ENCODE measurements at regions of chr20 and their contacts with region 1.

Region 1: GRCh38 chr20:51469578-51470498 is 72.7 kb downstream of the NFATC2 start:
- DNase-seq: no peak
- H3K4me3 Mint-ChIP-seq: no peak overlapping the region
- H3K27ac Mint-ChIP-seq: no peak overlapping the region
- H3K4me1 Mint-ChIP-seq: peaks cover 32% of the 10 kb centered on the region
- H3K27me3 Mint-ChIP-seq: no peaks in the 10 kb centered on the region

Region 2: DNA sequence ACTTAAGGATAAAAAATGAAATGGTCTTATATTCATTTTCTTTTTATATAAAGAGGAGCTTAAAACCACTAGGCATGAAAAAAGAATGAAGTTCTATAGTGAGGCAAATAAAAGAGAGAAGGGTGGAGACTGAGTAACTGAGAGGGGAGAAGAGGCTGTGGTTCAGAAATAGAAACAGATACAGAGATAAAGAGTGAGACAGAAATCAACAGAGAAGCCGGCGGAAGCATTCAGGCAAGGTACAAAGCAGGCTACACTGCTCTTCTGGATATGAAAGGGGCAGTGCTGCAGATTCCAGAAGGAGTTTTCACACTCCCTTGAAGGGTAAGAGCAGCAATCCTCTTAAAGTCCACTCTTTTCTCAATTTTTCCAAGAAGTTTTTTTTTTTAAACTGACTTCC is 42.8 kb after region 1 on chr20:
- CTCF ChIA-PET with region 1: no interaction called
- intact Hi-C with region 1: loop called (anchors 5 kb)
- DNase-seq: peak; percentile 45
- H3K4me3 Mint-ChIP-seq: no peak overlapping the region
- H3K27ac Mint-ChIP-seq: peak overlapping the region; percentile 74
- H3K4me1 Mint-ChIP-seq: peaks cover 75% of the 10 kb centered on the region
- H3K27me3 Mint-ChIP-seq: no peaks in the 10 kb centered on the region

Measured in activated naive CD4-positive, alpha-beta T cell treated with anti-CD3 and anti-CD28 coated beads for 36 hours (primary cell).